ENCODE measurements at regions of chr3 and their contacts with region 1.

Region 1: DNA sequence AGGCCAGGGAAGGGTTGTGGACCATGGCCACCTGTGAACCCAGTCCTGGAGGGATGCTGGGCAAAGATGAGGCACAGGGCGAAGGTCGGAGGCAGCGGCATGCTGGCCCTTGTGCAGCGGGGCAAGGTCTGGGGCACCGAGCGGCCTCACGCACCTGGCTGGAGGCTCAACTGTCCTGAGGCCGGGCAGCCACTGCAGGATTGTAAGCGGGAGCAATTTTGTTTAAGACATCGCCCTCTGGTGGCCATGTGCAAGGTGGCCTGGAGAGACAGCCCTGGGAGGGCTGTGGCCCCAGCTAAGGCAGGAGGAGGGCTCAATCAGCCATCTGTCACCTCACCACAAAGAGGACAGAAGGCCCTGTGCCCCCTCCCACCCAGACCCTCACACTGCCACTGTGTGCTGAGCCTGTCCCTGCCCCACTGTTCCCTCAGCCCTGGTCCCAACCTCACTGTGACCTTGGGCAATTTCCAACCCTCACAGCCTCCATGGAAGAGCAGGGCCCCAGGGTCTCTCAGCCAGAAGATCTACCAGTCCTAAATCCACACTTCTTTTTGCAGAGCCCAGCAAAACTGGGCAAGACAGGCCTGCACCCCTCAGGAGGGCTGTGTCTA is 46.2 kb downstream of the TPRA1 start:
- DNase-seq: peak; percentile 38
- H3K4me3 Mint-ChIP-seq: no peak overlapping the region
- H3K27ac Mint-ChIP-seq: no peak overlapping the region
- H3K4me1 Mint-ChIP-seq: peaks cover 10% of the 10 kb centered on the region
- H3K27me3 Mint-ChIP-seq: peaks cover 15% of the 10 kb centered on the region

Region 2: DNA sequence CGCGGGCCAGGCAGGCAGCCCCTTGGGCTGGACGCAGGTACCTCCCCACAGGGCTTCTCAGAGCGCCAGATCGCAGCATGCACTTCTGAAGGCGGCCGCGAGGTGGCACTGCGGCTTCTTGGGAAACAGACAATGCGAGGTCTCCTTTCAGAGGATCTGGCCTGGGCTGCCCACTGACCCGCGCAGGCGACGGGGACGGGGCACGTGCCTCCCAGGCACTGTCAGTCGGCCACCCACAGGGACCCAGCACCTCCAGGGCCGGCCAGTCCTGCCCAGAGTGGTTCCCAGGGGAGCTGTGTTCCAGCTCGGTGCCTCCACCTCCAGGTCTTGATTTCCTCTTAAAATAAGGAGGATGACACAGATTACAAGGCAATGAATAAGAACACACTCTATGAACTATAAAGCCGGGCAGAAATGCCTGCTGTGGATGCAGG is 865.0 kb before region 1 on chr3:
- intact Hi-C with region 1: loop called (anchors 2 kb)
- DNase-seq: peak; percentile 57
- H3K4me3 Mint-ChIP-seq: no peak overlapping the region
- H3K27ac Mint-ChIP-seq: no peak overlapping the region
- H3K4me1 Mint-ChIP-seq: peaks cover 3% of the 10 kb centered on the region
- H3K27me3 Mint-ChIP-seq: peaks cover 7% of the 10 kb centered on the region

Region 3: GRCh38 chr3:126752303-126752842 is 791.9 kb before region 1 on chr3:
- intact Hi-C with region 1: loop called (anchors 2 kb)
- DNase-seq: peak; percentile 33
- H3K4me3 Mint-ChIP-seq: no peak overlapping the region
- H3K27ac Mint-ChIP-seq: no peak overlapping the region
- H3K4me1 Mint-ChIP-seq: no peaks in the 10 kb centered on the region
- H3K27me3 Mint-ChIP-seq: no peaks in the 10 kb centered on the region

Region 4: DNA sequence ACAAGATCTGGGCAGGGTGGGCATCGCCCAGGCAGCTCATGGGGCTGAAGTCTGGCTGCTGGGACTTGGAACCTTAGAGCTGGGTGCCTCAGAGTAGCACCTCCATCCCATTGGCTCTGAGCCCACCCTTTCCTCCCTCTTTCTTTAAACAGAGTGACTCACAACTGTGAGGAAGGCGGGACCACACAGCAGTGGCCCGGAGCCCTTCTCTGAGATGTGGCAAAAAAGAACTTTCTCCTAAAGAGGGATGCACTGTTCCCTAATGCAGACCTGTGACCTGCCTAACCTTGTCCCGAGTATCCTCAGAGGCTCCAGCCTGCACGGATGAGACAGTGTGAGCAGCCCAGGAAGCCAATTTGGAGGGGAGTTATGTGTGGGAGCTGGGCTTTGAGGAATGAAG is 280.0 kb before region 1 on chr3:
- intact Hi-C with region 1: no loop called
- DNase-seq: no peak
- H3K4me3 Mint-ChIP-seq: no peak overlapping the region
- H3K27ac Mint-ChIP-seq: no peak overlapping the region
- H3K4me1 Mint-ChIP-seq: no peaks in the 10 kb centered on the region
- H3K27me3 Mint-ChIP-seq: no peaks in the 10 kb centered on the region

Region 5: GRCh38 chr3:127374086-127375010 is 169.9 kb before region 1 on chr3:
- intact Hi-C with region 1: loop called (anchors 10 kb)
- DNase-seq: no peak
- H3K4me3 Mint-ChIP-seq: no peak overlapping the region
- H3K27ac Mint-ChIP-seq: no peak overlapping the region
- H3K4me1 Mint-ChIP-seq: no peaks in the 10 kb centered on the region
- H3K27me3 Mint-ChIP-seq: no peaks in the 10 kb centered on the region

Region 6: DNA sequence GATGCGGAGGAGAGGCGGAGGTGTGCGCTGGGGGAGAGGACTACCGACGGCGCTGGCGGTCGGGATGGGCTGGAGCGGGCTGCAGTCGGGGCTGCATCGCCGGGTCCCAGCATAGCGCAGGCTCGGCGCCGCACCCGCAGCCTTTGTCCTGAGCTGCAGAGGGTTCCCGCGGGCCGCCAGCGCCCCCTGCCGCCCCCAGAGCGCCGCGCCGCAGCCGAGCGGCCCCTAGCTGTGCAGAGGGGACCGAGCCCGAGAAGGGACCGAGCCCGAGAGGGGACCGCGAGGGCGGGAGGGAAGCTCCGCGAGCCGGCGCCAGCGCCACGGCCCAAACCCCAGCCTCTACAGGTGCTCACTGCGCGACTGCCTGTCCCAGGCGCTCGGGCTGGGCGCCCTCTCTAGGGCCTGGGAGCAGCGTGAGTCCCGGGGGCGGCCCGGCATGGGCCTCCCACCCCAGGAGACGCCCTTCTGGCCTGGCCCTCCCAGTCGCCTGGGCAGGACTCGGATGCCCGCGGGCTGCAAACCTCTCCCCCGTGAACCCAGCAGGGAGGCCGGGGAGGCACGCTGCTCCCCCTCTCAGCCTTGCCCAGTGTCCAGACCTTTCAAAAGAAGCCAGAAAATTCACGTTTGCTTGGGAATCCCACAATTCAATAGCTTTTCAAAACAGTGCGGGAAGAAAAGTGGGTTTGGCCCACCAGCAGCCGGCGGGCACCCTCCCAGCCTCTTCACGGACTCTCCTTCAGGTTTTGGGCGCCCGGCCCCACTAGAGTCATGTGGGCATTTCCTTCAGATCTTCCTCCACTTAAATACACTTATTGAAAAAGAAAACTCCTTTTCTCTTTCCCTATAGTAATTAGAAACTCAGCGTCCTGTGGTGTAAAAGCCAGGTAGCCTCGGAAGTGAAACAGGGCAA is 88.5 kb before region 1 on chr3:
- intact Hi-C with region 1: loop called (anchors 5 kb)
- DNase-seq: peak; percentile 39
- H3K4me3 Mint-ChIP-seq: no peak overlapping the region
- H3K27ac Mint-ChIP-seq: no peak overlapping the region
- H3K4me1 Mint-ChIP-seq: no peaks in the 10 kb centered on the region
- H3K27me3 Mint-ChIP-seq: peaks cover 52% of the 10 kb centered on the region

Measured in activated T-helper 2 cell treated with anti-CD3 and anti-CD28 coated beads, Interferon-gamma antibody, Interleukin-2, Interleukin-4, amounts not matched to agents 10 μg/mL and 5 μg/mL and 100 μg/mL, durations not matched to agents 14 hours and 24 hours and 36 hours (primary cell).